Dendritic cell treated with granulocyte-macrophage colony-stimulating factor and Interleukin-4, amounts not matched to agents 40 ng/mL and 50 ng/mL, for 4 days (primary cell): ENCODE measurements at regions of chrX and their contacts with region 1.

Region 1: GRCh38 chrX:138925330-138925729 is 213.8 kb upstream of the FGF13 start:
- H3K4me3 Mint-ChIP-seq: no peak overlapping the region
- H3K27ac Mint-ChIP-seq: no peak overlapping the region
- H3K4me1 Mint-ChIP-seq: peaks cover 29% of the 10 kb centered on the region
- H3K27me3 Mint-ChIP-seq: no peaks in the 10 kb centered on the region

Region 2: GRCh38 chrX:138986235-138986634 is 60.9 kb after region 1 on chrX:
- intact Hi-C with region 1: loop called (anchors 10 kb)
- H3K4me3 Mint-ChIP-seq: no peak overlapping the region
- H3K27ac Mint-ChIP-seq: no peak overlapping the region
- H3K4me1 Mint-ChIP-seq: peaks cover 22% of the 10 kb centered on the region
- H3K27me3 Mint-ChIP-seq: no peaks in the 10 kb centered on the region